Left lung (tissue), 14 donors: ENCODE measurements at regions of chr15 and their contacts with region 1.

Region 1: GRCh38 chr15:74373731-74374647 is 6.5 kb upstream of the CYP11A1 start:
- DNase-seq: peak; percentile 84 to 96 (median 90)
- ATAC-seq: peak; percentile 99
- H3K4me3 ChIP-seq: peak overlapping the region; percentile 58 to 62
- H3K27ac ChIP-seq: peak overlapping the region in 1 of 2 donors; percentile 19
- H3K4me1 ChIP-seq: peaks cover 0 to 10% of the 10 kb centered on the region in 2 donors
- H3K27me3 ChIP-seq: peaks cover 0 to 10% of the 10 kb centered on the region in 2 donors
- CTCF ChIP-seq: peak; percentile 85 to 89

Region 2: DNA sequence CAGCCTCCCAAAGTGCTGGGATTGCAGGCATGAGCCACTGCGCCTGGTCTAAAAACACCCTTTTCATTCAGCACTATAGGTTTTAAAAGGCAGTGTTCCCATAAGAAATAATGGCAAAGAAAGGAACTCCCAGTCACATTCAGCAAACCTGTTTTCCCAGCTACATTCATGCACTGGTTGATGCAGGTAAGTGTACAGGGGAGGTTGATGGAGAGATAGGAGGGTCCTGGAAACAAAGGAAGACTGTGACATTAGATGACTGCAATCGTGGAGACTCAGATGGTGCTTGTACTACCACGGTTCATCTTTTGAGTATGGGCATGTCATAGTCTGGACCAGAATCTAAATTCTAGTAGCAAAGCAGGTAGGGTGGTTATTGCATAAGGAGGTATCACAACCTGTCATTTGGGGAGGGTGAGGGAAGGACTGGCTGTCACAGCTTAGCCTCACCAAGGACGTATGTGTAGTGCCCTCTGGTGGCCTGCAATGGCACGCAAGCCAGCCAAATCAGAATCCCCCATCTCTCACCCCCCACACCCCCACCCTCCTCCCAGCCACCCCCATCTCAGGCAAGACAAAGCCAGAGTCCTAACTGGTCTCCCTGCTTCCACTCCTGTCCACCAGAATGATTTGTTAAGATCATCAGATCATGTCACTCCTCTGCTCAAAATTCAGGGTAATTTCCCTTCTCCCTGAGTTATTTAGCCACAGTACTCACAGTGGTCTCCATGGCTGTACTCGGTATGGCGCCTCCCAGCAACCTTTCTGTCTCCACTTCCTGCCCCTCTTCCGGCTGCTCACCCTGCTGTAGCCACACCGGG is 115.7 kb after region 1 on chr15:
- intact Hi-C with region 1: loop called in 1 of 2 experiments (anchors 5 kb)
- DNase-seq: peak in 3 of 4 donors; percentile 18 to 46 (median 36)
- ATAC-seq: peak; percentile 83
- H3K4me3 ChIP-seq: no peak overlapping the region
- H3K27ac ChIP-seq: no peak overlapping the region
- H3K4me1 ChIP-seq: no peaks in the 10 kb centered on the region
- H3K27me3 ChIP-seq: no peaks in the 10 kb centered on the region
- CTCF ChIP-seq: peak; percentile 55 to 61

Region 3: GRCh38 chr15:74754593-74755215 is 380.7 kb after region 1 on chr15:
- intact Hi-C with region 1: loop called in 1 of 2 experiments (anchors 5 kb)
- DNase-seq: no peak
- ATAC-seq: no peak
- H3K4me3 ChIP-seq: no peak overlapping the region
- H3K27ac ChIP-seq: no peak overlapping the region
- H3K4me1 ChIP-seq: no peaks in the 10 kb centered on the region
- H3K27me3 ChIP-seq: no peaks in the 10 kb centered on the region
- CTCF ChIP-seq: no peak